ENCODE measurements at regions of chr2 and their contacts with region 1.

Region 1: DNA sequence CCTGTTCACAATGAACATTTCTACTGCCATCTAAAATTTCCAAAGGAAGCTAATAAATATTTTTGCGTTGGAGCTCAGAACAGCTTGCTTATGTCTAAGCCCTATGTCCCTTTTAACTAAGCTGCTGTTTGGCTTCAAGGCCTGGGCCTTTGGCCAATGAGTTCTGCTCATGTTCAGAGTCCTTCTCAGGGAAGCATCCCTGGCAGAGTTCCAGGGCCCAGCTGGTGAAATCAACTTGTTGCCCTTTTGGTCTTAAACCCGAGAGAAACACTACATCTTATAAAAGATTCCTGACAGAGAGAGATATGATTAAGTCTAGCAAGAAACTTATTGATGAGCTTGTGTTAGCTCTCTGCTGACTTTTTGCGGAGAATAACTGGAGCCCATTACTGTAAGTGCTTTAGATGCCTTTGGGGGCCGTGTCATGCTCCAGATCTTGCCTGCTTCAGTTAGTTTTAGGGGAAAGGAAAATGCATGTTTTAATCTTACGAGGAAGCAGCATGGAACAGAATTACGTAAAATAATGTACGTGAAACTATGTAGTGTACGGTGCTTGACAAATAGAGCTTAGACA is 102.5 kb upstream of the NOSTRIN start:
- DNase-seq: no peak
- ATAC-seq: no peak
- H3K4me3 ChIP-seq: no peak overlapping the region
- H3K27ac ChIP-seq: no peak overlapping the region
- H3K4me1 ChIP-seq: no peaks in the 10 kb centered on the region
- H3K27me3 ChIP-seq: no peaks in the 10 kb centered on the region
- CTCF ChIP-seq: no peak
- EP300 ChIP-seq: no peak
- POLR2A ChIP-seq: no peak
- RAD21 ChIP-seq: no peak

Region 2: DNA sequence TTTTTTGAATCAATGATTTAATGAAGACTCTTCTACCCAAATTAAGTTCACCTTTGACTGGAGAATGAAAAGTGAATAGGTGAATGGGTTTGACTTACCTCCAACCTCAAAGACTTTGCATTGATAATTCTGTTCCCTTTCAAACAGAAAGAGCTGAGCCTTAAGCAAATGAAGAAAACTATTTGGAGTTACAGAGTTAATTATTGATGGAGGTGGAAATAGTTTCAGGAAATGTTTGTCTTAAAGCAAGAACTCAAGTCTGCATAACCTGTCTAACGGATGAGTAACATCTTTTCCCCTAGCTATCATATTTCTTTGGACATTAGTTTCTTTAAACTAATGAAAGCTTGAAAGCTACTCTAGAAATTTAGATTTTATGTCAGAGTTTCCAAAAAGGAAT is 77.4 kb before region 1 on chr2:
- CTCF ChIA-PET with region 1: no interaction called
- POLR2A ChIA-PET with region 1: no interaction called
- RAD21 ChIA-PET with region 1: no interaction called
- SMC1A ChIA-PET with region 1: no interaction called
- in situ Hi-C with region 1: no loop called
- intact Hi-C with region 1: no loop called
- DNase-seq: no peak
- ATAC-seq: no peak
- H3K4me3 ChIP-seq: no peak overlapping the region
- H3K27ac ChIP-seq: no peak overlapping the region
- H3K4me1 ChIP-seq: peaks cover 7% of the 10 kb centered on the region; the same call in 1 of the 2 replicates
- H3K27me3 ChIP-seq: no peaks in the 10 kb centered on the region
- CTCF ChIP-seq: no peak
- EP300 ChIP-seq: no peak
- POLR2A ChIP-seq: no peak
- RAD21 ChIP-seq: no peak

Region 3: DNA sequence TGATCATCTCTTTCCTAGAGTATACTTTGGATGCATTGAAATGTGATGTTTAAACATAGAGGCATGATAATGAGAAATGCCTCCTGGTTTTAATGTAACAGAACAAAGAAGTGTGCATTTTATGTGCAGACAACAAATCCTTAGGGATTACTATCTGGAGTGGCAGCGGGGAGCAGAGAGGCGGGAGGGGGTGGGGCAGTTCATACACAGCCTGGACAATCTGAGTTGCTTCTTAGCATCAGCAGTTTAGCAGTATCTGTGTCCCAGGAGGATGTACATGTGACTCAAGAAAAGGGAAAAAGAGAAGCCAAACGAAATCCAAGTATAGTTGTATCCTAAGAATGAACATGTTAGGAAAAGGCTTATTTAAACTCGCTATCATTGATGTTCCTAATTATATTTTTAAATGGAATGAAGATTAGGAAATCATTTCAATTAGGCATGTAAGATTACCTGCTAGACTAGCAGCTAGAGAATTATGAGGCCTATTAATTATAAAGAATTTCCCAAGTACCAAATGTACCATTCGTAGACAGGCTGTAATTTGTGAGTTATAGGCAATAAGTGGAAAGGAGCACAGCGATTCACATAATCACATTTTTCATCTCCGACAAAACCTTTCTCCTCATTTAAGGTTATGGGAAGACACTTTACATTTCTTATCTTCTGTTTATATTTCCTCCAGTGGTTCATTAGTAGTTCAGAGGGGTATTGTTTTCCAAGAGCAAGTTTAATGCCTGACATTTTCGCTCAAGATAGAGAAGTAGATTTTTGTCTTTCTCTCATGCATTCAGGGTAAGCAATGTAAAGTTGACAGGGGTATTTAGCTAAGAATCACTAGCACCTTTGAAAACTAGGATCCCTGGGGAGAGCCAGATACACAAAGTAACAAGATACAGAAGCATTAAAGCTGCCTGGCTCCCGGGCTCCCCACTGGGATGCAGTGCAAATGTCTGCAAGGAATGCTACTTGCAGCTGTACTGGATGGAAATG is 38.8 kb before region 1 on chr2:
- CTCF ChIA-PET with region 1: no interaction called
- POLR2A ChIA-PET with region 1: interaction called, 11 read pairs
- RAD21 ChIA-PET with region 1: no interaction called
- SMC1A ChIA-PET with region 1: no interaction called
- in situ Hi-C with region 1: no loop called
- intact Hi-C with region 1: no loop called
- DNase-seq: no peak
- ATAC-seq: no peak
- H3K4me3 ChIP-seq: no peak overlapping the region
- H3K27ac ChIP-seq: no peak overlapping the region
- H3K4me1 ChIP-seq: no peaks in the 10 kb centered on the region
- H3K27me3 ChIP-seq: no peaks in the 10 kb centered on the region
- CTCF ChIP-seq: no peak
- EP300 ChIP-seq: no peak
- POLR2A ChIP-seq: no peak
- RAD21 ChIP-seq: no peak